ENCODE measurements at regions of chr19 and their contacts with region 1.

Region 1: GRCh38 chr19:49502866-49503581 is 6.8 kb downstream of the RPS11 start:
- DNase-seq: peak in 6 of 9 experiments; percentile 43 to 80 (median 58)
- ATAC-seq: no peak
- H3K4me3 ChIP-seq: no peak overlapping the region
- H3K4me3 Mint-ChIP-seq: no peak overlapping the region
- H3K27ac ChIP-seq: peak overlapping the region in 1 of 2 experiments; percentile 98
- H3K27ac Mint-ChIP-seq: peak overlapping the region; percentile 75
- H3K4me1 ChIP-seq: peaks cover 42% of the 10 kb centered on the region
- H3K4me1 Mint-ChIP-seq: peaks cover 40% of the 10 kb centered on the region
- H3K27me3 ChIP-seq: no peaks in the 10 kb centered on the region
- H3K27me3 Mint-ChIP-seq: no peaks in the 10 kb centered on the region
- CTCF ChIP-seq: peak; percentile 67

Region 2: GRCh38 chr19:48433337-48433736 is 1069.7 kb before region 1 on chr19:
- CTCF ChIA-PET with region 1: no interaction called
- POLR2A ChIA-PET with region 1: no interaction called
- intact Hi-C with region 1: no loop called
- DNase-seq: no peak
- ATAC-seq: no peak
- H3K4me3 ChIP-seq: no peak overlapping the region
- H3K4me3 Mint-ChIP-seq: no peak overlapping the region
- H3K27ac ChIP-seq: no peak overlapping the region
- H3K27ac Mint-ChIP-seq: no peak overlapping the region
- H3K4me1 ChIP-seq: no peaks in the 10 kb centered on the region
- H3K4me1 Mint-ChIP-seq: no peaks in the 10 kb centered on the region
- H3K27me3 ChIP-seq: peaks cover 0 to 2% of the 10 kb centered on the region in 2 experiments
- H3K27me3 Mint-ChIP-seq: peaks cover 21% of the 10 kb centered on the region
- CTCF ChIP-seq: no peak

Region 3: GRCh38 chr19:49157445-49158224 is 345.4 kb before region 1 on chr19 and contains the start of gene TRPM4:
- CTCF ChIA-PET with region 1: no interaction called
- POLR2A ChIA-PET with region 1: no interaction called
- intact Hi-C with region 1: no loop called
- DNase-seq: peak in 3 of 9 experiments; percentile 26 to 40 (median 38)
- ATAC-seq: peak; percentile 56
- H3K4me3 ChIP-seq: no peak within 1 kb of the TSS
- H3K4me3 Mint-ChIP-seq: peak within 1 kb of the TSS; percentile 44
- H3K27ac ChIP-seq: no peak within 1 kb of the TSS
- H3K27ac Mint-ChIP-seq: no peak within 1 kb of the TSS
- H3K4me1 ChIP-seq: peaks cover 6% of the 10 kb centered on the region
- H3K4me1 Mint-ChIP-seq: peaks cover 5% of the 10 kb centered on the region
- H3K27me3 ChIP-seq: peaks cover 5 to 16% of the 10 kb centered on the region in 2 experiments
- H3K27me3 Mint-ChIP-seq: peaks cover 61% of the 10 kb centered on the region
- CTCF ChIP-seq: no peak
- total RNA-seq, gene TRPM4: not detected

Region 4: DNA sequence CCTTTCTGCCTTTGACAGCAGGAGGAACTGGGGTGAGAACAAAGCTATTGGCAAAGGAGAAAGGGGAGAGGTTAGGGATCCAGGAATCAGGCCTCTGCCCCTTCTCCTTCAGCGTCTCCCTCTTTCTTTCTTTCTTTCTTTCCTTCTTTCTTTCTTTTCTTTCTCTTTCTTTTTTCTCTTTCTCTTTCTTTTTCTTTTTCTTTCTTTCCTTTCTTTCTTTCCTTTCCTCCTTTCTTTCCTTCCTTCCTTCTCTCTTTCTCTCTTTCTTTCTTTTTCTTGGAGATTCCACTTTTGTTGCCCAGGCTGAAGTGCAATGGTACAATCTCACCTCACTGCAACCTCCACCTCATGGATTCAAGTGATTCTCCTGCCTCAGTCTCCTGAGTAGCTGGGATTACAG is 269.9 kb before region 1 on chr19:
- CTCF ChIA-PET with region 1: no interaction called
- POLR2A ChIA-PET with region 1: no interaction called
- intact Hi-C with region 1: no loop called
- DNase-seq: no peak
- ATAC-seq: no peak
- H3K4me3 ChIP-seq: no peak overlapping the region
- H3K4me3 Mint-ChIP-seq: no peak overlapping the region
- H3K27ac ChIP-seq: no peak overlapping the region
- H3K27ac Mint-ChIP-seq: no peak overlapping the region
- H3K4me1 ChIP-seq: peaks cover 8% of the 10 kb centered on the region
- H3K4me1 Mint-ChIP-seq: peaks cover 9% of the 10 kb centered on the region
- H3K27me3 ChIP-seq: no peaks in the 10 kb centered on the region
- H3K27me3 Mint-ChIP-seq: peaks cover 6% of the 10 kb centered on the region
- CTCF ChIP-seq: no peak

Region 5: GRCh38 chr19:49520705-49521319 is 17.8 kb after region 1 on chr19:
- CTCF ChIA-PET with region 1: interaction called, 11 read pairs
- POLR2A ChIA-PET with region 1: no interaction called
- intact Hi-C with region 1: no loop called
- DNase-seq: no peak
- ATAC-seq: no peak
- H3K4me3 ChIP-seq: no peak overlapping the region
- H3K4me3 Mint-ChIP-seq: no peak overlapping the region
- H3K27ac ChIP-seq: no peak overlapping the region
- H3K27ac Mint-ChIP-seq: no peak overlapping the region
- H3K4me1 ChIP-seq: no peaks in the 10 kb centered on the region
- H3K4me1 Mint-ChIP-seq: peaks cover 5% of the 10 kb centered on the region
- H3K27me3 ChIP-seq: no peaks in the 10 kb centered on the region
- H3K27me3 Mint-ChIP-seq: no peaks in the 10 kb centered on the region
- CTCF ChIP-seq: no peak

Region 6: GRCh38 chr19:49533551-49534488 is 30.8 kb after region 1 on chr19:
- CTCF ChIA-PET with region 1: interaction called, 17 read pairs
- POLR2A ChIA-PET with region 1: interaction called, 3 read pairs
- intact Hi-C with region 1: no loop called
- DNase-seq: peak; percentile 72 to 92 (median 86)
- ATAC-seq: peak; percentile 91
- H3K4me3 ChIP-seq: peak overlapping the region; percentile 71 to 78
- H3K4me3 Mint-ChIP-seq: peak overlapping the region; percentile 84
- H3K27ac ChIP-seq: peak overlapping the region in 1 of 2 experiments; percentile 36
- H3K27ac Mint-ChIP-seq: peak overlapping the region; percentile 55
- H3K4me1 ChIP-seq: peaks cover 21% of the 10 kb centered on the region
- H3K4me1 Mint-ChIP-seq: peaks cover 23% of the 10 kb centered on the region
- H3K27me3 ChIP-seq: peaks cover 0 to 3% of the 10 kb centered on the region in 2 experiments
- H3K27me3 Mint-ChIP-seq: no peaks in the 10 kb centered on the region
- CTCF ChIP-seq: no peak

Region 7: GRCh38 chr19:49555600-49556411 is 52.8 kb after region 1 on chr19:
- CTCF ChIA-PET with region 1: interaction called, 28 read pairs
- POLR2A ChIA-PET with region 1: interaction called, 7 read pairs
- intact Hi-C with region 1: no loop called
- DNase-seq: peak; percentile 66 to 90 (median 77)
- ATAC-seq: peak; percentile 75
- H3K4me3 ChIP-seq: peak overlapping the region; percentile 59 to 78
- H3K4me3 Mint-ChIP-seq: peak overlapping the region; percentile 58
- H3K27ac ChIP-seq: peak overlapping the region; percentile 28 to 34
- H3K27ac Mint-ChIP-seq: peak overlapping the region; percentile 95
- H3K4me1 ChIP-seq: peaks cover 88% of the 10 kb centered on the region
- H3K4me1 Mint-ChIP-seq: peaks cover 74% of the 10 kb centered on the region
- H3K27me3 ChIP-seq: no peaks in the 10 kb centered on the region
- H3K27me3 Mint-ChIP-seq: no peaks in the 10 kb centered on the region
- CTCF ChIP-seq: no peak

Measured in CD8-positive, alpha-beta T cell (primary cell).